HEK293 (cell line): ENCODE measurements at regions of chr2 and their contacts with region 1.

Region 1: DNA sequence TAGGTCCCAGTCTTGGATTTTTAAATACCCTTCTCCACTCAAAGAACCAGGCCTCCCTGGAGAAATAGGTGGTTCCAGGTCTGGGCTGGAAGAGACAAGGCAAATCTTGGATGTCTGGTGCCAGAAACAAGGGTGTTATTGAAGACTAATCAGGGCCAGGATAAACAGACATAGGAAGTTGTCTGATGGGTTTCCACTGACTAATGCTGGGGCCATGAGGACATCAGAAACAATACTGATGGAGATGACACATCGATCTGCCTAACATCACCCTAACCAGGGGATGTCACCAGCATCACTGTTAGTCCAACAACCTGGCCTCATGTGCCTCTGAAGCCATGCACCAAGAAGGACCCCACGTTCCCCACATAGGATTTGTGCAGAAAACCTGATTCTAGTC is 42.5 kb upstream of the GLI2 start:
- H3K4me3 ChIP-seq: no peak overlapping the region
- H3K27ac ChIP-seq: no peak overlapping the region
- H3K4me1 ChIP-seq: no peaks in the 10 kb centered on the region
- CTCF ChIP-seq: no peak

Region 2: GRCh38 chr2:120712180-120712681 is 19.1 kb after region 1 on chr2:
- CTCF ChIA-PET with region 1: interaction called, 20 read pairs
- POLR2A ChIA-PET with region 1: no interaction called
- H3K4me3 ChIP-seq: no peak overlapping the region
- H3K27ac ChIP-seq: no peak overlapping the region
- H3K4me1 ChIP-seq: no peaks in the 10 kb centered on the region
- CTCF ChIP-seq: no peak

Region 3: GRCh38 chr2:120852200-120852815 is 159.2 kb after region 1 on chr2:
- CTCF ChIA-PET with region 1: no interaction called
- POLR2A ChIA-PET with region 1: no interaction called
- H3K4me3 ChIP-seq: no peak overlapping the region
- H3K27ac ChIP-seq: no peak overlapping the region
- H3K4me1 ChIP-seq: 0 out of 2 replicates have a peak, but pooled peaks cover under 1% of the 10 kb centered on the region
- CTCF ChIP-seq: no peak

Region 4: GRCh38 chr2:120920454-120921148 is 227.5 kb after region 1 on chr2:
- CTCF ChIA-PET with region 1: no interaction called
- POLR2A ChIA-PET with region 1: no interaction called
- H3K4me3 ChIP-seq: no peak overlapping the region
- H3K27ac ChIP-seq: no peak overlapping the region
- H3K4me1 ChIP-seq: no peaks in the 10 kb centered on the region
- CTCF ChIP-seq: no peak

Region 5: GRCh38 chr2:120958623-120959366 is 265.7 kb after region 1 on chr2:
- CTCF ChIA-PET with region 1: interaction called, 12 read pairs
- POLR2A ChIA-PET with region 1: no interaction called
- H3K4me3 ChIP-seq: no peak overlapping the region
- H3K27ac ChIP-seq: no peak overlapping the region
- H3K4me1 ChIP-seq: no peaks in the 10 kb centered on the region
- CTCF ChIP-seq: no peak

Region 6: GRCh38 chr2:121018136-121019061 is 325.3 kb after region 1 on chr2:
- CTCF ChIA-PET with region 1: interaction called, 10 read pairs
- POLR2A ChIA-PET with region 1: no interaction called
- H3K4me3 ChIP-seq: no peak overlapping the region
- H3K27ac ChIP-seq: no peak overlapping the region
- H3K4me1 ChIP-seq: no peaks in the 10 kb centered on the region
- CTCF ChIP-seq: no peak

Region 7: GRCh38 chr2:121071034-121071504 is 377.9 kb after region 1 on chr2:
- CTCF ChIA-PET with region 1: interaction called, 172 read pairs
- POLR2A ChIA-PET with region 1: interaction called, 9 read pairs
- H3K4me3 ChIP-seq: no peak overlapping the region
- H3K27ac ChIP-seq: no peak overlapping the region; the same call in 1 of the 2 replicates
- H3K4me1 ChIP-seq: peaks cover 8% of the 10 kb centered on the region; the same call in 1 of the 2 replicates
- CTCF ChIP-seq: peak; percentile 81